ENCODE measurements at regions of chr2 and their contacts with region 1.

Region 1: DNA sequence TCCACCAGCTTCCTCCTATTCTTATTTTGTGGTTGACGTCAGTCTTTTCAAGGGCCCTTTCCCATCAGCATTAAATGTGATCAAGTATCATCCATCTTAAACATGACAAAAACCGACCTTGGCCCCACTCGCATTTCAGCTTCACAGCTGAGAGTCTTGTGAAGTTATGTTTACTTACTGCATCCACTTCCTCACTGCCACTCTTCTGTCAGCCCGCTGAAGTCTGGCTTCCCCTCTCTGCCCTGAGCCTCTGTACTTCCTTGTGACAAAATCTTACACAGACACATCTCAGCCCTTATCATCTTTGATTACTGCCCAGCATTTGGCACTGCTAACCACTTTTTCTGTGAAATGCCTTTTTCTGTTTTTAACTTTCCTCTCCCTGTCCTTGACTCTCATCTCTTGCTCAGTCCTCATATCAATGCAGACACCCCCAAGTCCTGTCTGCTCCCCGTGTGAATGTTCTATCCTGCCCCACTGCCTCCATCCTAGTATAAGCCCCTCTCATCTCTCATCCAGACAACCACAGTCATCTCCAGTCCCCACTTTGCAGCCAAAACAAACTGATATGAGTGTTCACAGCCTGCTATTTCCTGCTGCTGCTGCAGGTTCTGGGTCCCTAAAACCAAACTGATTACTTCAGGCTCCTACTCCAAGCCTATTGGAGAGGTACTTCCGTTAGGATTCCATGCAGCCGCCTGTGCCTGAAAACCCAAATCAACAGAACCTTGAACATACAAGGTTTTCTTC is 31.4 kb downstream of the FOSL2 start:
- DNase-seq: peak; percentile 57
- ATAC-seq: peak; percentile 73
- H3K4me3 Mint-ChIP-seq: peak overlapping the region; percentile 38
- H3K27ac Mint-ChIP-seq: peak overlapping the region; percentile 90
- H3K4me1 Mint-ChIP-seq: peaks cover 44% of the 10 kb centered on the region
- H3K27me3 Mint-ChIP-seq: no peaks in the 10 kb centered on the region

Region 2: GRCh38 chr2:28413142-28413898 is 10.7 kb before region 1 on chr2:
- CTCF ChIA-PET with region 1: interaction called, 4 read pairs
- POLR2A ChIA-PET with region 1: interaction called, 5 read pairs
- intact Hi-C with region 1: loop called (anchors 1 to 2 kb)
- DNase-seq: no peak
- ATAC-seq: no peak
- H3K4me3 Mint-ChIP-seq: no peak overlapping the region
- H3K27ac Mint-ChIP-seq: peak overlapping the region; percentile 47
- H3K4me1 Mint-ChIP-seq: peaks cover 42% of the 10 kb centered on the region
- H3K27me3 Mint-ChIP-seq: no peaks in the 10 kb centered on the region

Measured in activated CD4-positive, alpha-beta T cell treated with anti-CD3 and anti-CD28 coated beads for 36 hours (primary cell).